ENCODE measurements at regions of chr13 and their contacts with region 1.

Region 1: GRCh38 chr13:31431722-31432137 is 232.0 kb downstream of the B3GLCT start:
- DNase-seq: no peak
- H3K4me3 ChIP-seq: no peak overlapping the region
- H3K27ac ChIP-seq: no peak overlapping the region
- H3K4me1 ChIP-seq: no peaks in the 10 kb centered on the region
- H3K27me3 ChIP-seq: no peaks in the 10 kb centered on the region
- CTCF ChIP-seq: peak; percentile 8 to 60 (median 30)
- POLR2A ChIP-seq: no peak

Region 2: DNA sequence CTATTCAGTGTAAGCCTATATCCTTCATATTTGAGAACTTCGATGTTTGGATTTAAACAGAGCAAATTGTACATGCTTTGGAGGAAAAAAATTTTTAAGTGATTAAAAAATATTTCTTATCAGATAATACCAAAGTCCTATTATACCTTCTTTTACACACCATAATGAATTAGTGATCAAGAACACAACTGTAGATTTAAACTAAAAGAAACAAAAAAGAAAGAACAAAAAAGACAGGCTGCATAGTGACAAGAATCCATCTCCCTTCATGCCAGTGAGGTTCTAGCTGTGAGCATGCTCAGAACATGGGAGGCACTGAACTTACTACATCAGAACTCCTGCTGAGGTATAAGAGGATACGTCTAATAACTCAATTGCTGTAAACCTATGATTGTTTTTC is 307.5 kb after region 1 on chr13 and contains the start of gene RXFP2:
- intact Hi-C with region 1: loop called (anchors 5 kb)
- DNase-seq: no peak
- H3K4me3 ChIP-seq: no peak within 1 kb of the TSS
- H3K27ac ChIP-seq: no peak within 1 kb of the TSS
- H3K4me1 ChIP-seq: no peaks in the 10 kb centered on the region
- H3K27me3 ChIP-seq: no peaks in the 10 kb centered on the region
- CTCF ChIP-seq: no peak
- POLR2A ChIP-seq: no peak
- total RNA-seq, gene RXFP2: not detected

Region 3: DNA sequence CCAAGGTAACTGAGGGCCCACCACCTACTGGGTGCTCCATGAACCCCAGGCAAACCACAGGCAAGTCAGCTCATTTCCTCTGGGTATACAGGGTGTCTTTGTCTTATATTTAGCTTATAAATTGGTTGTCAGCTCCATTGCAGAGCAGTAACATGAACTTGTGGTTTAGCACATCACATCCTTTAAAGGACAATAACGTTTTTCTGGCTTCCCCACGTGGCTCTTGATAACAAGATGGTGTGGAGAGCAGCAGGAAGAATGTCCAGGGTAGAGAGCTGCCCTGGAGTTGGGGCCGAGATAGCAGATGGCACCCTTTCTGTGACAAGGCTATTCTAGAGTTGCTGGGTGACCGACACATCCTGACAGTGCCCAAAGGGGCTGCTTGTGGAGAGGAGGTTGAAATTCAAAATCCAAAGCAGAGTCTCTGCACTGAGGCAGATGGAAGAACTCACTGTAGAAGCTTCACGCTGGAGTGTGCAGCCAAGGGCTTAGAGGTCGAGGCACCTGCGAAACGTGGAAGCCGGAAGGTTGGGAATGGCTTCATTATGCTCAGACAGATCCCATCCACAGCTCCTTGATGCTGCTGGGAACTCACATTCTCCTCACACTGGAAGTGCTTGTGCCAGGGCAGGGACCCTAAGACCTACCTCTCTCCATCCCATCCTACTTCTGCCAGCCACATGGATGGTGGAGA is 466.8 kb after region 1 on chr13:
- intact Hi-C with region 1: no loop called
- DNase-seq: no peak
- H3K4me3 ChIP-seq: no peak overlapping the region
- H3K27ac ChIP-seq: no peak overlapping the region
- H3K4me1 ChIP-seq: no peaks in the 10 kb centered on the region
- H3K27me3 ChIP-seq: no peaks in the 10 kb centered on the region
- CTCF ChIP-seq: no peak
- POLR2A ChIP-seq: no peak

Measured in vagina (tissue), 2 donors.